GM10248 (cell line): ENCODE measurements at regions of chr7 and their contacts with region 1.

Region 1: GRCh38 chr7:130301501-130302020 is 8.6 kb downstream of the CPA4 start:
- DNase-seq: no peak
- CTCF ChIP-seq: no peak

Region 2: DNA sequence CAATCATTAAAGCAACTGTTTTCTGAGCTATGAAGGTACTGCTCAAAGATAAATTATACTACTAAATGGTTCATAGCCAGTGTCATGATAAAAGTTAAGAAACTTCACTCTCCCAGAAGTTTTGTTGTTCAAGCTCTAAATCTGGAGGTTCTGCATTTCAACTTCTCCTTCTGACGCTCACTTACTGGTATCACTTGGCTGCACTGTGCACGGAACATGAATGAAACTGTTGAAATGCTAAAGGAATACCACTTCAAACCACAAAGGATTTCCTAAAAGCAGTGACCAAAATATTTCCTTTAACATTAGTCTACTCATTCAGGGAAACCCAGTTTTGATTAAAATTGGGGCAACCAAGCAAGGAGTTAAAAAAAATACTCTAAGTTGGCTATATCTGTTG is 442.4 kb before region 1 on chr7:
- CTCF ChIA-PET with region 1: no interaction called
- POLR2A ChIA-PET with region 1: no interaction called
- DNase-seq: no peak
- CTCF ChIP-seq: no peak

Region 3: GRCh38 chr7:129986600-129986999 is 315.0 kb before region 1 on chr7:
- CTCF ChIA-PET with region 1: no interaction called
- POLR2A ChIA-PET with region 1: no interaction called
- DNase-seq: no peak
- CTCF ChIP-seq: no peak

Region 4: GRCh38 chr7:130286881-130287280 is 14.7 kb before region 1 on chr7:
- CTCF ChIA-PET with region 1: interaction called, 10 read pairs
- POLR2A ChIA-PET with region 1: no interaction called
- DNase-seq: no peak
- CTCF ChIP-seq: no peak

Region 5: DNA sequence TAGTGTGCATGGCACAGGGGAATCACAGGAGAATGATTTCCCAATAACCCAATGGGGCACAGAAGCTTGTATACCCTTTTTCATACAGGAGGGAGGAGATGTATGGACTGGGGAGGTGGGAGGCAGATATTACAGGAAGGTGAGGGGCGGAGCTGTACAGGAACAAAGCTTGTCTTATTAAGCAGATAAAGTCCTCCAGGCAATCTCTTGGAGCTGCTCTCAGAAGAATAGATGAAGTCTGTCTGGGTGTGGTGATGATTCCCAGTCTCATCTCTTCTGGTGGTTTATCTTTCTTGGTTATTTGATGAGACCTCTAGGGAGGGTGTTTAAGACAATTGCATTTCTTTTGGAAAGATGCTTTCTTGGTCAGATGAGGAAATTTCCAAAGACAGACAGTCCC is 18.0 kb after region 1 on chr7:
- CTCF ChIA-PET with region 1: no interaction called
- POLR2A ChIA-PET with region 1: no interaction called
- DNase-seq: no peak
- CTCF ChIP-seq: no peak